ENCODE measurements at regions of chr21 and their contacts with region 1.

Region 1: GRCh38 chr21:37366482-37367316 is at the start of gene DYRK1A:
- DNase-seq: peak; percentile 95
- H3K4me3 Mint-ChIP-seq: peak within 1 kb of the TSS; percentile 97
- H3K27ac Mint-ChIP-seq: peak within 1 kb of the TSS; percentile 98
- H3K4me1 Mint-ChIP-seq: no peaks in the 10 kb centered on the region
- H3K27me3 Mint-ChIP-seq: no peaks in the 10 kb centered on the region
- CTCF ChIP-seq: no peak
- total RNA-seq, gene DYRK1A: 45.4 and 45.6 TPM in 2 replicates

Region 2: DNA sequence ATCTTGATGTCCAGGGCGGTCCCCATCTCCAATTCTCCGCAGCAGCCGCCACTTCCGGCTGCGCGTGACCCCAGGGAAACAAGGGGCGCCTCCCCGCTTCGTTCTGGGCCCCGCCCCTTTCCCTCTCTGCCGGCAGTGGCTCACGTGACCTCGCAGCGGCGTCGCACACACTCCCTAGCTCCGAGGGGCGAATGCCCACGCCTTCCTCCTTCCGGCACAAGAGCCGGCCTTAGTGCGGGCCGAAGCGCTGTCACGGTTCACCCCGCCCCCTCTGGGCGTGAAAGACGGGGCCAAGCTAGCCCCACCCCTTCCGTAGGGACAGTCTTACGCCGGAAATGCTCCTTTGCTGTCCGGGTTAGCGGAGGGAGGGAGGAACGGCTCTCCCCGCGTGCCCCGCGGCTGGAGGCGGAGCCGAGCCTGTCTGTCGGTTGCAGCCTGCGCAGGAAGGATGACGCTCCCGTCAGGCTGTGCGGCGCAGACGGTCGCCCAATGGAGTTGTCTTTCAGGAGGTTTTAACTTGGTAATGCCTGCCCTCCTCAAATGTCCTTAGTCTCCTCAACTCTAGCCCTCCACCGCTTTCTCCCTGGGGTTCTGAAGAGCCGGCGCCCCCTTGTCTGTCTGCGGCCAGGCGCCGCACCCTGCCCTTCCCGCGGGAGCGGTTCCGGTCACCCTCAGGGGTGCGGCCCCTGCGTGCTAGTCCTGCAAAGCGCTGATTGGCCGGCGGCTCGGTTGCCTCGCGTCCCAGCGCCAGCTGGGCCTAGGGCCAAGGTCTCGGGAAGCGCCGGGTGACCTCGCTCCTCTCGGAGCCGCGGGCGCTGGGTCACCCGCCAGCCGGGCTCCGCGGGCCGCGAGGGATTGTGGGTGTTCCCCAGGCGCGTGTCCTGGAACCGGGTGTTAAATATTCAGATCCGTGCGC is 99.2 kb before region 1 on chr21 and contains the start of gene VPS26C:
- CTCF ChIA-PET with region 1: interaction called, 4 read pairs
- intact Hi-C with region 1: loop called (anchors 5 kb)
- DNase-seq: peak; percentile 96
- H3K4me3 Mint-ChIP-seq: peak within 1 kb of the TSS; percentile 92
- H3K27ac Mint-ChIP-seq: peak within 1 kb of the TSS; percentile 84
- H3K4me1 Mint-ChIP-seq: no peaks in the 10 kb centered on the region
- H3K27me3 Mint-ChIP-seq: no peaks in the 10 kb centered on the region
- CTCF ChIP-seq: no peak
- total RNA-seq, gene VPS26C: 30.6 and 32.3 TPM in 2 replicates

Region 3: DNA sequence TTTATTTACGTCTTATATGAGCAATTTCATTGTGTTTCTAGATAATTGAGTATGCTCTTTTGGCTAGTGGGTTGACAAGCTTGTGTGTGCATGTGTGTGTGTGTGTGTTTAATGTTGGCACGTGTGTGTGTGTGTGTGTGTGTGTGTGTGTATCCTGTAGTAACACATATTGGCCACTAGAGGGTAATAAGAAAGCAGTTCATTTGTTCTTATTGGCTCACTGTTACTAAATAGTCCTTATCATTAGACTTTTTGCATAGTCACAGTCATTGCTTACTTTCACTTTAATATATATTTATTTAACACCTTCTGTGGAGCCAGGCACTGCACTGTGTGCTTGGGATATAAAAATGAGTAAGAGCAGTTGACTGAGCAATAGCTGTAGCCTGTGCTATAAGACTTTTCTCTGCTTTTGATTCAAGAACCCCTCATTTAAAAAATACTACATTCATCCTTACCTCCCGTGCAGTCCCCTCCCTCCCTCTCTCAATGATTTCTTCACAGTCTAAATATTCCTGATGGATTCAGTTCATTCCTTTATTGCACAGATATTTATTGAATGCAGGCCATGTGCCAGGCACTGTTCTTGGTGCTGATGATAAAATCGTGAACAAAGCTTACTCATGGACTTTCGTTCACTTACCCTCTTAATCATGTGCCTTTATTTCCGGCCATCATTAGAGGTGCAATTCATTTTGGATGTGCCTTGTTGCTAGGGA is 96.5 kb after region 1 on chr21:
- CTCF ChIA-PET with region 1: interaction called, 3 read pairs
- intact Hi-C with region 1: loop called (anchors 5 kb)
- DNase-seq: no peak
- H3K4me3 Mint-ChIP-seq: peak overlapping the region; percentile 44
- H3K27ac Mint-ChIP-seq: peak overlapping the region; percentile 54
- H3K4me1 Mint-ChIP-seq: peaks cover 35% of the 10 kb centered on the region
- H3K27me3 Mint-ChIP-seq: no peaks in the 10 kb centered on the region
- CTCF ChIP-seq: no peak